ENCODE measurements at regions of chr12 and their contacts with region 1.

Region 1: GRCh38 chr12:22083167-22083566 is 37.1 kb downstream of the CMAS start:
- DNase-seq: peak in 2 of 4 experiments; percentile 11 to 38
- ATAC-seq: peak; percentile 36
- H3K4me3 ChIP-seq: no peak overlapping the region
- H3K27ac ChIP-seq: no peak overlapping the region
- H3K4me1 ChIP-seq: peaks cover 0 to 11% of the 10 kb centered on the region in 2 experiments; a peak in 3 of 5 replicates
- H3K27me3 ChIP-seq: no peaks in the 10 kb centered on the region
- CTCF ChIP-seq: peak; percentile 15 to 59 (median 33); a peak in 3 of 6 replicates
- EP300 ChIP-seq: no peak
- POLR2A ChIP-seq: no peak
- RAD21 ChIP-seq: peak in 1 of 2 experiments; percentile 63; a peak in 3 of 4 replicates

Region 2: DNA sequence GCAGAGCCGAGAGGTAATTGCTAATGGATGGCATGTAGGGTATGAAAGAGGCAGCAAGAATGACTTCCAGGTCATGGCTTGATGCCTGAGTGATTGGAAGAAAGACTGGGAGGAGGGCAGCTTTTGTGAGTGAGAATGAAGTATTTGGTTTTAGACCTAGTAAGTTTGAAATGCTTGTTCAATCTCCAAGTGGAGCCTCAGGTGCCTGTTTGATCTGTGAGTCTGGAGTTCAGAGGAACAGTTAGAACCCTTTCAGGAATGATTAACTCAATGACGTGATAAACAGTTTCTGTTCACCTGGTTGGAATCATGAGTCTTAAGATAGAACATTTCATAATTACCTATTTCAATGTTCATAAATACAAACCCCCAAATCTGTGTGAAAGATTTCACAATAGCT is 319.1 kb before region 1 on chr12:
- CTCF ChIA-PET with region 1: no interaction called
- POLR2A ChIA-PET with region 1: no interaction called
- in situ Hi-C with region 1: no loop called
- intact Hi-C with region 1: no loop called
- DNase-seq: no peak
- ATAC-seq: no peak
- H3K4me3 ChIP-seq: no peak overlapping the region
- H3K27ac ChIP-seq: no peak overlapping the region
- H3K4me1 ChIP-seq: no peaks in the 10 kb centered on the region
- H3K27me3 ChIP-seq: no peaks in the 10 kb centered on the region
- CTCF ChIP-seq: no peak
- EP300 ChIP-seq: no peak
- POLR2A ChIP-seq: no peak
- RAD21 ChIP-seq: no peak

Region 3: DNA sequence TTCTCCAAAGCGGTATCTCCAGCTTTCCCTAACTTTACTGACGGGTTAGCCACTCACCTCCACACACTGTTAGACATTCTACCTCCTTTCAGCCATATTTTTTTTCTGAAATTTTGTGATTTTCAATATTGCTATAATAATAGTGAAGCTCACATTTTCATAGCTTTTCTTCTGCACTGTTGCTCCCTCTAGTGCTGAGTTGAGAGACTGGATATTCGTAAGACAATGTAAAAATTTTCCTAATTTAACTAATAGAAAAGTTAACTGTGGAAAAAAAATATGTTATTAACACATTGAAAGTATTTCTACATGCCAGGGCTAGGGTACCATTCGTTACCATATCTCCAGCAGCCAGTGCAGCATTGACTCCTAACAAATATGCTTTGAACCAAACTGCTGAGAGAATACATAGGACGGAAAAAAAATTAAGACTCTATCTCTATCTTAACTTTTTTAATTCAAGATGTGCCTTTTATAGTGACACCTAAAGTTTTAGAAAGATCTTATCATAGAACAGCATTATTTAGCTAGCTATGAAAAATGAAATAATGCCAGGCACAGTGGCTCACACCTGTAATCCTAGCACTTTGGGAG is 93.3 kb before region 1 on chr12:
- CTCF ChIA-PET with region 1: no interaction called
- POLR2A ChIA-PET with region 1: no interaction called
- in situ Hi-C with region 1: no loop called
- intact Hi-C with region 1: loop called (anchors 2 kb)
- DNase-seq: peak in 1 of 4 experiments; percentile 34
- ATAC-seq: 0 out of 3 replicates have a peak, but pooled peaks have one; percentile 30
- H3K4me3 ChIP-seq: no peak overlapping the region
- H3K27ac ChIP-seq: no peak overlapping the region
- H3K4me1 ChIP-seq: peaks cover 0 to 11% of the 10 kb centered on the region in 2 experiments; a peak in 2 of 5 replicates
- H3K27me3 ChIP-seq: no peaks in the 10 kb centered on the region
- CTCF ChIP-seq: peak in 2 of 3 experiments; percentile 21 to 56; a peak in 3 of 6 replicates
- EP300 ChIP-seq: no peak
- POLR2A ChIP-seq: no peak
- RAD21 ChIP-seq: peak; percentile 16 to 54; a peak in 2 of 4 replicates

Region 4: GRCh38 chr12:22046090-22046967 is 36.8 kb before region 1 on chr12 and contains the start of gene CMAS:
- CTCF ChIA-PET with region 1: no interaction called
- POLR2A ChIA-PET with region 1: no interaction called
- in situ Hi-C with region 1: no loop called
- intact Hi-C with region 1: loop called (anchors 2 kb)
- DNase-seq: peak; percentile 80 to 94 (median 83)
- ATAC-seq: peak; percentile 83
- H3K4me3 ChIP-seq: peak within 1 kb of the TSS; percentile 93
- H3K27ac ChIP-seq: peak within 1 kb of the TSS; percentile 88
- H3K4me1 ChIP-seq: peaks cover 10 to 50% of the 10 kb centered on the region in 2 experiments; a peak in 4 of 5 replicates
- H3K27me3 ChIP-seq: no peaks in the 10 kb centered on the region
- CTCF ChIP-seq: no peak
- EP300 ChIP-seq: peak; percentile 87; the same call in 1 of the 2 replicates
- POLR2A ChIP-seq: peak; percentile 82
- RAD21 ChIP-seq: no peak; a peak in 1 of 4 replicates
- polyA plus RNA-seq, gene CMAS: 29.7 to 32.0 TPM

Region 5: GRCh38 chr12:22334410-22335290 is 251.5 kb after region 1 on chr12 and contains the start of gene ST8SIA1:
- CTCF ChIA-PET with region 1: no interaction called
- POLR2A ChIA-PET with region 1: no interaction called
- in situ Hi-C with region 1: no loop called
- intact Hi-C with region 1: loop called (anchors 10 kb)
- DNase-seq: no peak
- ATAC-seq: no peak
- H3K4me3 ChIP-seq: peak within 1 kb of the TSS; percentile 27
- H3K27ac ChIP-seq: no peak within 1 kb of the TSS
- H3K4me1 ChIP-seq: peaks cover 0 to 18% of the 10 kb centered on the region in 2 experiments; a peak in 2 of 5 replicates
- H3K27me3 ChIP-seq: peaks cover 0 to 10% of the 10 kb centered on the region in 2 experiments; a peak in 3 of 5 replicates
- CTCF ChIP-seq: no peak
- EP300 ChIP-seq: no peak
- POLR2A ChIP-seq: no peak
- RAD21 ChIP-seq: no peak
- polyA plus RNA-seq, gene ST8SIA1: 22.9 to 26.3 TPM

Region 6: GRCh38 chr12:22443379-22444316 is 360.5 kb after region 1 on chr12:
- CTCF ChIA-PET with region 1: interaction called, 4 read pairs
- POLR2A ChIA-PET with region 1: no interaction called
- in situ Hi-C with region 1: loop called (anchors 5 kb)
- intact Hi-C with region 1: loop called (anchors 1 kb)
- DNase-seq: peak; percentile 32 to 81 (median 45)
- ATAC-seq: peak; percentile 100
- H3K4me3 ChIP-seq: no peak overlapping the region
- H3K27ac ChIP-seq: no peak overlapping the region
- H3K4me1 ChIP-seq: no peaks in the 10 kb centered on the region
- H3K27me3 ChIP-seq: no peaks in the 10 kb centered on the region
- CTCF ChIP-seq: peak; percentile 68 to 79 (median 77)
- EP300 ChIP-seq: no peak
- POLR2A ChIP-seq: no peak
- RAD21 ChIP-seq: peak; percentile 66 to 85

Region 7: GRCh38 chr12:22765421-22766130 is 682.4 kb after region 1 on chr12:
- CTCF ChIA-PET with region 1: no interaction called
- POLR2A ChIA-PET with region 1: no interaction called
- in situ Hi-C with region 1: no loop called
- intact Hi-C with region 1: no loop called
- DNase-seq: no peak
- ATAC-seq: no peak
- H3K4me3 ChIP-seq: no peak overlapping the region
- H3K27ac ChIP-seq: no peak overlapping the region
- H3K4me1 ChIP-seq: no peaks in the 10 kb centered on the region
- H3K27me3 ChIP-seq: peaks cover 0 to 6% of the 10 kb centered on the region in 2 experiments; a peak in 3 of 5 replicates
- CTCF ChIP-seq: no peak
- EP300 ChIP-seq: no peak
- POLR2A ChIP-seq: no peak
- RAD21 ChIP-seq: no peak

Measured in K562 (cell line).